ENCODE measurements at regions of chr5 and their contacts with region 1.

Region 1: DNA sequence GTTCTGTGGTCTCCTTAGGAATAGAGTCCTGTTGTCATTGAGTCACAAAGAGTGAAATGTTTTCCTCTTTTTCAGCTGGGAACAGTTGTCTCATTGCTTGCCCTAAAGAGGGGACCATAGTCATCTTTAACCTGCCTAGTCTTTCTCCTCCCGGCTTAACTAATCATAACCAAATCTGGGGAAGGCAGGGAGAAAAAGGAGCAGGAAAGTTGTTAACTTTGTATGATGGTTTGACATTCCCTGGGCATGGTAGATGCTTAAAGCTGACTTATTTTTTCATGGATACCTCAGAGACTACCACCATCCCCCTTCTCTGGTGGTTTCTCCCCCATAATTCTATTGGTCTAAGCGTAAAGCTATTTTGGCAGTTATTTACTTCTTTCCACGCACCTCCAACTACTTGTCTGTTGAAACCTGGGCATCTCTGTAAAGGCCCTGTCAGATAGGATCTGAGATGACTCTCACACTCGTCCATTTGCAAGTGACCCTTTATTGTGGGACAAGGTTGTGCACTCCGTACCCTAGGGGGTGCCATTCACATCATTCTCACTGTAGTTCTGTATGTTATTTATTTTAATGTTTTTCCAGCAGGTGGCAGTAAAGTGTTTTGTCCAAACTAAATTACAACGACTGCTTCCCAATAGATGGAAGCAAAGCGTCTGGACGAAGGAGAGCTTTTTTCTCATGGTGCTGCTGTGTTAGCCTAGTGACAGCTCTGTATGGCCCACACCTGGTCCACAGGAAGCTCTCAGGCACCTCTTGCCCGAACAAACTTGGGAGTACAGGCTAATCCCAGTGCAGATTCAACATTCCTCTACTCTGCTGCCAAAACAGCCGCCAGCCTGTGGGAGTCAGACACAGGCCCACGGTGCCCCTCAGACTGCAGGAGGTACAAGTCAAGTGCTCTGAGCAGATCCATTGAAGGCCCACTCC is 3.0 kb upstream of the FAM13B start:
- DNase-seq: peak; percentile 80
- H3K4me3 Mint-ChIP-seq: no peak overlapping the region
- H3K27ac Mint-ChIP-seq: peak overlapping the region; percentile 59
- H3K4me1 Mint-ChIP-seq: peaks cover 22% of the 10 kb centered on the region
- H3K27me3 Mint-ChIP-seq: no peaks in the 10 kb centered on the region
- CTCF ChIP-seq: peak; percentile 87

Region 2: DNA sequence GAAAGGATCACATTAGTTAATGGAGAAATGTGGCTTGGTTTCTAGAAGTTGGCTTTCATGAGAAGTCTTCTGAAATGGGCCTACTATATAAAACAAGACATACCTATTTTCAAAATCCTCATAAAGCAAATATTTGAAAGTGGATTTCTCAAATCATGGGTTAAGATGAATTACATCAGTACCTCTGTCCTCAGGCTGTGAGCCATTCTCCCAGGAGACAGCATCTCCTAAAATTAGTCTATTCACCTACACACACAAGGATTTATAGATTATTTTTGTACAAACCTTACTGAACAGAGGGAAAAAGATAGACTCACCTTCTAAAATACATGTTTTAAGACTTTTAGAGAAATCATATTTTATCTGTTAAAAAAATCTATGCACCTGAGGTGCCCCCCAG is 504.6 kb before region 1 on chr5:
- CTCF ChIA-PET with region 1: no interaction called
- intact Hi-C with region 1: no loop called
- DNase-seq: no peak
- H3K4me3 Mint-ChIP-seq: no peak overlapping the region
- H3K27ac Mint-ChIP-seq: no peak overlapping the region
- H3K4me1 Mint-ChIP-seq: no peaks in the 10 kb centered on the region
- H3K27me3 Mint-ChIP-seq: peaks cover 52% of the 10 kb centered on the region
- CTCF ChIP-seq: no peak

Region 3: GRCh38 chr5:137695651-137696428 is 340.0 kb before region 1 on chr5:
- CTCF ChIA-PET with region 1: no interaction called
- intact Hi-C with region 1: no loop called
- DNase-seq: no peak
- H3K4me3 Mint-ChIP-seq: no peak overlapping the region
- H3K27ac Mint-ChIP-seq: no peak overlapping the region
- H3K4me1 Mint-ChIP-seq: no peaks in the 10 kb centered on the region
- H3K27me3 Mint-ChIP-seq: no peaks in the 10 kb centered on the region
- CTCF ChIP-seq: no peak

Region 4: DNA sequence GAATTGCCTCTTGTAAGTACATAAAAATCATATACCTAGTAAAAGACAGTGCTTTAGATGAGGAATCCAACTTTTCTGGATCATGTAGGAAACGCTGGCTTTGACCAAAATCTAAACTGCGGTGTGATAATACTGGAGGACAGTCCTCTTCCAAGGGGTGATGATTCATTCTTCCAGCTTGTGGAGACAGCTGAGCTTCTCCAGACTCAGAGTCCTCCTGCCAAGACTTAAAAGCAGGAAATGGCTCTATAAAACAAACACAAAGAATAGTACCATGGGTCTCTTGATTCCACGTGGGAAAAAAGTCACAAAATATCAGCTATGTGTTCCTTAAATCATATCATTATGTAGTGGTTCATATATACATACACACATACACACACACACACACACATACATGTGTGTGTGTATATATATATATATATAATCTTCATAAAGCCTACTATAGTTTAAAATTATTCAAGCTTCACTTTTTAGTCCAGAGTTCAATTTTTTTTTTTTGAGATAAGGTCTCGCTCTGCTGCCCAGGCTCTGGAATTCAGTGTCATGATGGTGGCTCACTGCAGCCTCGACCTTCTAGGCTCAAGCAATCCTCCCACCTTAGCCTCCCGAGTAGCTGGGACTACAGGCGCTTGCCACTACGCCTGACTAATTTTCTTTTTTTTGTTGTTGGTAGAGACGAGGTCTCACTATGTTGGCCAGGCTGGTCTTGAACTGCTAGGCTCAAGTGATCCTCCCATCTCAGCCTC is 81.6 kb before region 1 on chr5:
- CTCF ChIA-PET with region 1: no interaction called
- intact Hi-C with region 1: no loop called
- DNase-seq: no peak
- H3K4me3 Mint-ChIP-seq: no peak overlapping the region
- H3K27ac Mint-ChIP-seq: no peak overlapping the region
- H3K4me1 Mint-ChIP-seq: no peaks in the 10 kb centered on the region
- H3K27me3 Mint-ChIP-seq: no peaks in the 10 kb centered on the region
- CTCF ChIP-seq: no peak

Region 5: GRCh38 chr5:138065102-138065501 is 29.2 kb after region 1 on chr5:
- CTCF ChIA-PET with region 1: interaction called, 20 read pairs
- intact Hi-C with region 1: loop called (anchors 1 kb)
- DNase-seq: peak; percentile 40
- H3K4me3 Mint-ChIP-seq: no peak overlapping the region
- H3K27ac Mint-ChIP-seq: no peak overlapping the region
- H3K4me1 Mint-ChIP-seq: no peaks in the 10 kb centered on the region
- H3K27me3 Mint-ChIP-seq: no peaks in the 10 kb centered on the region
- CTCF ChIP-seq: peak; percentile 60